Tibial artery (tissue), 4 donors: ENCODE measurements at regions of chr16 and their contacts with region 1.

Region 1: GRCh38 chr16:86508947-86509758 is 1.2 kb upstream of the FOXF1 start:
- DNase-seq: no peak
- H3K4me3 ChIP-seq: peak overlapping the region; percentile 58 to 75
- H3K27ac ChIP-seq: peak overlapping the region; percentile 43 to 64
- H3K4me1 ChIP-seq: peaks cover 0 to 54% (median 47%) of the 10 kb centered on the region in 4 donors
- H3K27me3 ChIP-seq: peaks cover 21 to 93% of the 10 kb centered on the region in 2 donors
- CTCF ChIP-seq: no peak

Region 2: GRCh38 chr16:84699712-84700445 is 1809.3 kb before region 1 on chr16 and contains the start of gene USP10:
- intact Hi-C with region 1: loop called (anchors 10 kb)
- DNase-seq: peak; percentile 76 to 83
- H3K4me3 ChIP-seq: peak within 1 kb of the TSS; percentile 99
- H3K27ac ChIP-seq: peak within 1 kb of the TSS; percentile 94
- H3K4me1 ChIP-seq: peaks cover 0 to 25% (median 13%) of the 10 kb centered on the region in 4 donors
- H3K27me3 ChIP-seq: no peaks in the 10 kb centered on the region
- CTCF ChIP-seq: no peak

Region 3: GRCh38 chr16:86297866-86298757 is 211.0 kb before region 1 on chr16:
- intact Hi-C with region 1: no loop called
- DNase-seq: no peak
- H3K4me3 ChIP-seq: no peak overlapping the region
- H3K27ac ChIP-seq: no peak overlapping the region
- H3K4me1 ChIP-seq: peaks cover 0 to 5% (median 2%) of the 10 kb centered on the region in 4 donors
- H3K27me3 ChIP-seq: peaks cover 0 to 83% of the 10 kb centered on the region in 2 donors
- CTCF ChIP-seq: no peak

Region 4: GRCh38 chr16:86343027-86343787 is 165.9 kb before region 1 on chr16:
- intact Hi-C with region 1: loop called (anchors 5 kb)
- DNase-seq: peak; percentile 65 to 89
- H3K4me3 ChIP-seq: peak overlapping the region; percentile 6 to 29
- H3K27ac ChIP-seq: peak overlapping the region; percentile 57 to 69
- H3K4me1 ChIP-seq: peaks cover 0 to 22% (median 14%) of the 10 kb centered on the region in 4 donors
- H3K27me3 ChIP-seq: peaks cover 0 to 23% of the 10 kb centered on the region in 2 donors
- CTCF ChIP-seq: no peak

Region 5: GRCh38 chr16:86387461-86388440 is 121.4 kb before region 1 on chr16:
- intact Hi-C with region 1: no loop called
- DNase-seq: no peak
- H3K4me3 ChIP-seq: no peak overlapping the region
- H3K27ac ChIP-seq: no peak overlapping the region
- H3K4me1 ChIP-seq: no peaks in the 10 kb centered on the region
- H3K27me3 ChIP-seq: peaks cover 0 to 75% of the 10 kb centered on the region in 2 donors
- CTCF ChIP-seq: no peak